GM12878 (cell line): ENCODE measurements at regions of chr5 and their contacts with region 1.

Region 1: GRCh38 chr5:76402886-76403765 is at the start of gene IQGAP2:
- DNase-seq: no peak
- ATAC-seq: peak; percentile 76
- H3K4me3 ChIP-seq: peak within 1 kb of the TSS; percentile 86
- H3K27ac ChIP-seq: peak within 1 kb of the TSS; percentile 91
- H3K4me1 ChIP-seq: peaks cover 25% of the 10 kb centered on the region
- H3K27me3 ChIP-seq: no peaks in the 10 kb centered on the region
- CTCF ChIP-seq: peak; percentile 78 to 93 (median 80)
- EP300 ChIP-seq: peak in 1 of 2 experiments; percentile 55; a peak in 1 of 4 replicates
- POLR2A ChIP-seq: peak; percentile 78
- RAD21 ChIP-seq: peak; percentile 68
- polyA plus RNA-seq, gene IQGAP2: 17.7 to 17.9 TPM

Region 2: GRCh38 chr5:76210946-76211345 is 192.2 kb before region 1 on chr5:
- CTCF ChIA-PET with region 1: no interaction called
- POLR2A ChIA-PET with region 1: no interaction called
- RAD21 ChIA-PET with region 1: no interaction called
- SMC1A ChIA-PET with region 1: no interaction called
- in situ Hi-C with region 1: no loop called
- intact Hi-C with region 1: no loop called
- DNase-seq: no peak
- ATAC-seq: no peak
- H3K4me3 ChIP-seq: no peak overlapping the region
- H3K27ac ChIP-seq: no peak overlapping the region
- H3K4me1 ChIP-seq: no peaks in the 10 kb centered on the region
- H3K27me3 ChIP-seq: no peaks in the 10 kb centered on the region
- CTCF ChIP-seq: no peak
- EP300 ChIP-seq: no peak
- POLR2A ChIP-seq: no peak
- RAD21 ChIP-seq: no peak

Region 3: GRCh38 chr5:76319673-76320072 is 83.5 kb before region 1 on chr5:
- CTCF ChIA-PET with region 1: no interaction called
- POLR2A ChIA-PET with region 1: no interaction called
- RAD21 ChIA-PET with region 1: no interaction called
- SMC1A ChIA-PET with region 1: no interaction called
- in situ Hi-C with region 1: no loop called
- intact Hi-C with region 1: no loop called
- DNase-seq: no peak
- ATAC-seq: no peak
- H3K4me3 ChIP-seq: no peak overlapping the region
- H3K27ac ChIP-seq: no peak overlapping the region
- H3K4me1 ChIP-seq: no peaks in the 10 kb centered on the region
- H3K27me3 ChIP-seq: no peaks in the 10 kb centered on the region; a peak in 1 of 4 replicates
- CTCF ChIP-seq: no peak
- EP300 ChIP-seq: no peak
- POLR2A ChIP-seq: no peak
- RAD21 ChIP-seq: no peak

Region 4: DNA sequence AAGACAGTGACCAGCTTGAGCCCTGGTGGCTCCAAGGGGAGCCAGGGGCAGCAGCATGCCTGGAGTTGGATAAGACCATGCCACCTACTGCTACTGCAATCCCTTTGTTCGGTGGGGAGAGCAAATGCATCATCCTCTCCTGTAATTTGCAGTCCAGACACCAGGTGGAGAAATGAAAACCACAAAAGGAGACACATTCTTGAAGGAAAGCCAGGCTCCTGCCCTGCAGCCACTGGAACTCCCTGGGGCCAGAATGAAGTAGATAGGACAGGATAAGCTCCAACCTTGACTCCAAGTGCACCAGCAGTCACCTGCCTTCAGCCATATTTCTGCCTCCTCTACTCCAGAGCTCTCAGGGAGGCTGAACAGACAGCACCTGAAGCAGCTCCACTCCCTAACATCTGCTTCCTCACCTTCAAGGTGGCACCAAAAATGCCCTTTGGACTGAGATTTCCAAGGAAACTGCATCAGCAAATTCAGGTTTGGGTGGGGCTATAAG is 65.1 kb before region 1 on chr5:
- CTCF ChIA-PET with region 1: no interaction called
- POLR2A ChIA-PET with region 1: no interaction called
- RAD21 ChIA-PET with region 1: interaction called, 3 read pairs
- SMC1A ChIA-PET with region 1: no interaction called
- in situ Hi-C with region 1: no loop called
- intact Hi-C with region 1: loop called (anchors 5 kb)
- DNase-seq: peak; percentile 24
- ATAC-seq: peak; percentile 86
- H3K4me3 ChIP-seq: no peak overlapping the region
- H3K27ac ChIP-seq: no peak overlapping the region
- H3K4me1 ChIP-seq: no peaks in the 10 kb centered on the region
- H3K27me3 ChIP-seq: no peaks in the 10 kb centered on the region
- CTCF ChIP-seq: peak; percentile 47 to 62 (median 57); a peak in 5 of 6 replicates
- EP300 ChIP-seq: no peak
- POLR2A ChIP-seq: no peak
- RAD21 ChIP-seq: peak; percentile 52

Region 5: DNA sequence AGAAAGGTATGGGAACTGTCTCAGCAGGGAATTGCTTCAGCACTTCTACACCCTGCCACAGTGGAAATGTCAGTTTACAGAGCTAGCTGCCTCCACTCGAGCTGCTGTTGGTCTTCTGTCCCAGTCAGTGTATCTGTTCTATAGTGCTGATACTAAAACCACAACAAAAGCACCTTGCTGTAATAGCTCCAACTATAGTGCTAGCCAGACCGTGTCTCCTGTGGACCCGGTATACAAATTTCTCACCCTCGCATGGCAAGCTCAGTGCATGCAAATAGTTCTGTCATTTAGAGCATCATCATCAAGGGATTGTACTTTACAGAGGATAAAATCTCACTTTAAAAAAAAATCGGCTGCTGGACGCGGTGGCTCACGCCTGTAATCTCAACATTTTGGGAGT is 51.5 kb before region 1 on chr5:
- CTCF ChIA-PET with region 1: interaction called, 10 read pairs
- POLR2A ChIA-PET with region 1: interaction called, 7 read pairs
- RAD21 ChIA-PET with region 1: interaction called, 29 read pairs
- SMC1A ChIA-PET with region 1: interaction called, 38 read pairs
- in situ Hi-C with region 1: no loop called
- intact Hi-C with region 1: loop called (anchors 2 kb)
- DNase-seq: peak; percentile 87
- ATAC-seq: peak; percentile 100
- H3K4me3 ChIP-seq: no peak overlapping the region; the same call in 1 of the 2 replicates
- H3K27ac ChIP-seq: peak overlapping the region; percentile 15; the same call in 1 of the 2 replicates
- H3K4me1 ChIP-seq: peaks cover 10% of the 10 kb centered on the region
- H3K27me3 ChIP-seq: no peaks in the 10 kb centered on the region
- CTCF ChIP-seq: no peak
- EP300 ChIP-seq: peak; percentile 38 to 61; a peak in 2 of 4 replicates
- POLR2A ChIP-seq: no peak
- RAD21 ChIP-seq: no peak

Region 6: DNA sequence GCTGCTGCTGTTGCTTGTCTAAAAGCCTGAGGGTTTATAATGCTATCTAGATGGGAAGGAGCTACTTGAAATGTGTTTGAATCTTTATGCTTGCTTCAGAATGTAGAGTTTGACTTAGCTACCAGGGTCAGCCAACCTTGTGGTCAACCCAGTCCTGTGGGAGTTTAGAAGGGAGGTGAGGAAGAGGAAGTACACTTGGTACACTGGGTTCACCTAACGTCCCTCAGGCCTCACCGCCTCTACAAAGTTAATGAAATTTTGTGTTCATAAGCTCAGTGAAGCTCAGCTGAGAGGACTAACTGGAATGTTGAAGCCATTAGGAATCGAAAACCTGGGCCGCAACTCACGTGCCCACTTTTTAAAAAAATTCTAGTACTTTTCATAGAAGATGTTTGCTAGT is 10.6 kb after region 1 on chr5:
- CTCF ChIA-PET with region 1: interaction called, 10 read pairs
- POLR2A ChIA-PET with region 1: no interaction called
- RAD21 ChIA-PET with region 1: no interaction called
- SMC1A ChIA-PET with region 1: interaction called, 3 read pairs
- in situ Hi-C with region 1: no loop called
- intact Hi-C with region 1: no loop called
- DNase-seq: no peak
- ATAC-seq: peak; percentile 39; the same call in 1 of the 3 replicates
- H3K4me3 ChIP-seq: no peak overlapping the region
- H3K27ac ChIP-seq: no peak overlapping the region
- H3K4me1 ChIP-seq: no peaks in the 10 kb centered on the region
- H3K27me3 ChIP-seq: no peaks in the 10 kb centered on the region
- CTCF ChIP-seq: no peak
- EP300 ChIP-seq: no peak
- POLR2A ChIP-seq: no peak
- RAD21 ChIP-seq: no peak

Region 7: DNA sequence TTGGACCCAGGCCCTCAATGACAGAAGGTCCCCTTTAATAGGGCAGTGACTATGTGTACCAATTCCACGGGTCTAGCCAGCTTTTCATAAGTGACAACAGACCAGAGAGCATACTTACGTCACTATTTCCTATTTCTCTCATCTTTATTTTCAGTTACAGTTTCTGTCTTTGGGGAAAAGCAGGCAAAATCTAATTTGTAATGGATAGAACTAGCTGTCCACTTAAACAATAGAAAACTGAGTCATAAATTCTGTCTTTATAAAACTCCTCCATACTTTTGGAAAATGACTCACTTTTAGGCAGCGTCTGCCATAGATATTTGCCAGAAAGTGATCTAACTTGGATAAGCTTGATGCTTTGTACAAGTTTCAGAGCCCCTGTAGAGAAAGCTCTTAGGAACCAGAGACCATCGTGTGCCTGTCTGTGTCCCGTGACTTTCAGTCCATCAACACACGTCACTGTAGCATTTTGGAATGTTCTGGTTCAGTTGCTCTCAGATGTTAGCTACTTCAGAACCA is 118.2 kb after region 1 on chr5:
- CTCF ChIA-PET with region 1: interaction called, 8 read pairs
- POLR2A ChIA-PET with region 1: interaction called, 5 read pairs
- RAD21 ChIA-PET with region 1: interaction called, 14 read pairs
- SMC1A ChIA-PET with region 1: interaction called, 10 read pairs
- in situ Hi-C with region 1: no loop called
- intact Hi-C with region 1: loop called (anchors 2 kb)
- DNase-seq: no peak
- ATAC-seq: peak; percentile 93
- H3K4me3 ChIP-seq: no peak overlapping the region
- H3K27ac ChIP-seq: peak overlapping the region; percentile 78
- H3K4me1 ChIP-seq: peaks cover 8% of the 10 kb centered on the region; the same call in 1 of the 2 replicates
- H3K27me3 ChIP-seq: no peaks in the 10 kb centered on the region
- CTCF ChIP-seq: no peak
- EP300 ChIP-seq: no peak; a peak in 1 of 4 replicates
- POLR2A ChIP-seq: no peak
- RAD21 ChIP-seq: no peak

Region 8: GRCh38 chr5:76733049-76733417 is 329.9 kb after region 1 on chr5:
- CTCF ChIA-PET with region 1: interaction called, 3 read pairs
- POLR2A ChIA-PET with region 1: no interaction called
- RAD21 ChIA-PET with region 1: no interaction called
- SMC1A ChIA-PET with region 1: no interaction called
- in situ Hi-C with region 1: no loop called
- intact Hi-C with region 1: loop called (anchors 10 kb)
- DNase-seq: peak; percentile 96
- ATAC-seq: peak; percentile 86
- H3K4me3 ChIP-seq: peak overlapping the region; percentile 50
- H3K27ac ChIP-seq: peak overlapping the region; percentile 61; the same call in 1 of the 2 replicates
- H3K4me1 ChIP-seq: peaks cover 29% of the 10 kb centered on the region
- H3K27me3 ChIP-seq: no peaks in the 10 kb centered on the region
- CTCF ChIP-seq: no peak
- EP300 ChIP-seq: peak; percentile 99 to 100
- POLR2A ChIP-seq: no peak
- RAD21 ChIP-seq: no peak